ENCODE measurements at regions of chr9 and their contacts with region 1.

Region 1: DNA sequence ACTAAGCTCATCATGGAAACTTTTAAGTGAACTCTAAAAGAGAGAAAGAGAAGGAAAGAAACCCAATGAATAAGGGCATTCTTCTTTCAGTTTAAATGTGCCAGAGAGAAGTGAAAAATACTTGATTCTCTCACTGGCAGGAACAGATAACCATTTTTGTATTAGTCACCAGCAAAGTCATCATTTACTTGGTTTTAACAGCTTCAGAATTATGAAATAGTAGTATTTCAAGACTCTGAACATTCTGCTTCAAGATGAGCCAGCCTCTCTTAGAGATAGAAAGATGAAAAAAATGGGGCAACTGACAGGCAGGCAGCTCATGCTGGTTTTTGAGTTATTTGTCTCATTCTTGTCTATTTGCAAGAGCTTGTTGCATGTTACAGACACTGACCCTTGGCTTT is 103.5 kb downstream of the GCNT1 start:
- DNase-seq: no peak
- H3K4me3 Mint-ChIP-seq: no peak overlapping the region
- H3K27ac Mint-ChIP-seq: no peak overlapping the region
- H3K4me1 Mint-ChIP-seq: peaks cover 16% of the 10 kb centered on the region
- H3K27me3 Mint-ChIP-seq: peaks cover 17% of the 10 kb centered on the region

Region 2: DNA sequence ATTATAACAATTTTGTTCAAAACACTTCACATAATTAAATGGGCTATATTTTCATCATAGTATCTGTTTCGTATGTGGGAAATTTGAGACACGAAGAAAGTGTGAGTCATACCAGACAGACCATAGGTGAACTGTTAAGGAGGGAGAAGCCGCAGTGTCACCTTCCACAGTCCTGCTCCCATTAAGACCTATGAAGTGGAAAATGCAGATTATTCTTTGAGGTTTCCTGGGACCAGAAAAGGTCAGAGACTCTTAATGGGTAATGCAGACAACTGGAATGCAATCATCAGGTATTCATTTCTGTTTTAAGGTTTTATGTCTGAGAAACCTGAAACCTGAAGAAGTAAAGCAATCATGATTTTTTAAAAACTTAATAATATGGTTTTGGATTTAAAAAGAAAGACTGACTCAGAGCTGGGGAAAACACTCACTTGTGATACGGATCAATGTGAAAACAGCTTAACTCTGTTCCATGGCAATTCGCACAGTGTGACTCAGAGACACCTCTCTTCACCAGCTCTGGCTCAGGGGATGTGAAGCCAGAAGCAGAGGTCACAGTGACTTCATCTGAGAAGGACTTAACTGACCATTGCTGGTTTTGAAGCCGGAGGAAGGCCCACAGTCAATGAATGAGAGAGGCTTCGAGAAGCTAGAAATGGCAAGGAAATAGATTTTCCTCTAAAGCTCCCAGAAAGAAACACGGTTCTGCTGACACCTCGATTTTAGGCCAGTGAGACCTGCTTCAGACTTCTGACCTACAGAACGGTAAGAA is 120.8 kb before region 1 on chr9:
- CTCF ChIA-PET with region 1: no interaction called
- intact Hi-C with region 1: loop called (anchors 1 kb)
- DNase-seq: peak; percentile 49
- H3K4me3 Mint-ChIP-seq: peak overlapping the region; percentile 28
- H3K27ac Mint-ChIP-seq: peak overlapping the region; percentile 77
- H3K4me1 Mint-ChIP-seq: peaks cover 24% of the 10 kb centered on the region
- H3K27me3 Mint-ChIP-seq: peaks cover 8% of the 10 kb centered on the region

Region 3: GRCh38 chr9:76458903-76459690 is 103.4 kb before region 1 on chr9 and contains the start of gene GCNT1:
- CTCF ChIA-PET with region 1: no interaction called
- intact Hi-C with region 1: loop called (anchors 1 kb)
- DNase-seq: peak; percentile 89
- H3K4me3 Mint-ChIP-seq: peak within 1 kb of the TSS; percentile 90
- H3K27ac Mint-ChIP-seq: no peak within 1 kb of the TSS
- H3K4me1 Mint-ChIP-seq: peaks cover 12% of the 10 kb centered on the region
- H3K27me3 Mint-ChIP-seq: peaks cover 8% of the 10 kb centered on the region
- total RNA-seq, gene GCNT1: 0.48 to 0.54 TPM

Region 4: GRCh38 chr9:76519075-76519835 is 43.3 kb before region 1 on chr9:
- CTCF ChIA-PET with region 1: no interaction called
- intact Hi-C with region 1: no loop called
- DNase-seq: no peak
- H3K4me3 Mint-ChIP-seq: no peak overlapping the region
- H3K27ac Mint-ChIP-seq: no peak overlapping the region
- H3K4me1 Mint-ChIP-seq: no peaks in the 10 kb centered on the region
- H3K27me3 Mint-ChIP-seq: peaks cover under 1% of the 10 kb centered on the region

Region 5: DNA sequence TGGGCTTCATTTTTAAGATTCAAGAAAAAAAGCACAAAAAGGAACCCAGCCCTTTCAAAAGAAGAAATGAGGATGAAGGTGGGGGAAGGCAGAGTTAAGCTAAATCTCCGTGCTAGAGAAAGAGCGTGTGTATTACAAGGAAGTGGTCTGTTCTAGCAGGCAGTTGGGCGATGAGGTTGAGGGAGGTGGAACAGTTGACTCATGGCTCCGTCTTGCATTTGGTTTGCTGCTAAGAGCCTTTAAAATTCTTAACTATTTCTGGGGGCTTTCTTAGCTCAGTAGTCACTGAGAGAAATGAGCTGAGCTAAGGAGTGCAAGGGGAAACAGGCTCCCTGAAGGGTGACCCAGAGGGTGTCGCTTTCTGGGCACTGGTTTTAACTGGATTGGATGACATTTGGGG is 13.8 kb after region 1 on chr9:
- CTCF ChIA-PET with region 1: no interaction called
- intact Hi-C with region 1: loop called (anchors 1 kb)
- DNase-seq: peak; percentile 73
- H3K4me3 Mint-ChIP-seq: no peak overlapping the region
- H3K27ac Mint-ChIP-seq: no peak overlapping the region
- H3K4me1 Mint-ChIP-seq: peaks cover 11% of the 10 kb centered on the region
- H3K27me3 Mint-ChIP-seq: peaks cover 37% of the 10 kb centered on the region

Region 6: DNA sequence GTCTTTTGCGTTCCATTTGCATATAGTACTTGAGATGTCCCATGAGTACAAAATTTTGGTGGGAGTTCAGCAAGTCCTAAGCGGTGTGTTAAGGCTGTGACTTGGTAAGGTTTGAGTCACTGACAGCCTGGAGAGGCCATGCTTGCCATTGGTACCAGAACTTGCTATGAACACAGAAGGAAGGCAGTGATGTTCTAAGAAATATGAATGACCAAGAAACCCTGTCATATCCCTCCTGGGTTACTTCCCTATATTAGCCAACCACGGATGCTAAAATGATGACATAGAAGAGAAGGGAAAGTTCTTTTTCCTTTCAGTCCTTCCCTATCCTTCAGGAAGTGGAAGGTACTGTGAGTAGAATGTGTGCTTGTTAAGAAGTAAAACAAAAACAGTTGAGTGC is 33.1 kb after region 1 on chr9:
- CTCF ChIA-PET with region 1: interaction called, 4 read pairs
- intact Hi-C with region 1: loop called (anchors 5 kb)
- DNase-seq: no peak
- H3K4me3 Mint-ChIP-seq: no peak overlapping the region
- H3K27ac Mint-ChIP-seq: no peak overlapping the region
- H3K4me1 Mint-ChIP-seq: peaks cover 4% of the 10 kb centered on the region
- H3K27me3 Mint-ChIP-seq: no peaks in the 10 kb centered on the region